Activated B cell treated with CpG ODN at 0.5 μM for 24 hours (primary cell): ENCODE measurements at regions of chr1 and their contacts with region 1.

Region 1: DNA sequence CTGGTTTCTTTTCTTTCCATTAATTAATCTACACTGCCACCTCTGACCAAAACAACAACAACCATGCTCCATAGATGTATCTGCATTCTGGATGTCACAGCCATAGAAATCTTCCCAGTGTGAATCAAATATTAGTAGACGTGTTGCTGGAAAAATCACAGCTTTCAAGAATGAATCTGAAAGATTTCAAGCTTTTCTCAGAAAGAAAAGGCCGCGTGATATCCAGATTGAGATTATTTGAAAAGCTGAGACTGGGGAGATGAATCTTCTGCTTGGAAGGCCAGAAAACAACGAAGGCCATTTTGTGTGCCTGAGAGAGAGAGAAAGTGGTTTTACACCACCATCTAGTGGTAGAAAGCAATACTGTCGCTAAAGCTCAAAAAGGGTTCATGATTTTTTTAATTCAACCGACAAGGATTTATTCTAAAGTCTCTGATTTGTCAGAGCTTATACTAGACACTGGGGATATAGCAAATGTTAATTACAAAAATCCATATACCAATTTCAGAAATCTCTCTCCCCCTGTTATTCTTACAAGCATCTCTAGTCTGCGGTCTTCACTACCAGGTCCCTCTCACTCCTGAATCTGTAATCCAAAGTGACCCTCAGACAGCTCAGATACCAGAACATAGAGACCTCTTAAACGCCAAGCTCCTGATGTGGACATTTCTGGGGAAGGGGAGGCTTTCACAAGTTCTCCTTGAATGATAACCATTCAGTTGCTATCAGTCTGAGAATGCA is 87.5 kb upstream of the SGIP1 start:
- DNase-seq: no peak
- ATAC-seq: peak; percentile 69
- H3K4me3 Mint-ChIP-seq: peak overlapping the region; percentile 69
- H3K27ac Mint-ChIP-seq: peak overlapping the region; percentile 93
- H3K4me1 Mint-ChIP-seq: peaks cover 33% of the 10 kb centered on the region
- H3K27me3 Mint-ChIP-seq: no peaks in the 10 kb centered on the region
- CTCF ChIP-seq: no peak

Region 2: GRCh38 chr1:65687428-65688214 is 758.8 kb before region 1 on chr1:
- CTCF ChIA-PET with region 1: no interaction called
- POLR2A ChIA-PET with region 1: no interaction called
- intact Hi-C with region 1: loop called (anchors 2 kb)
- DNase-seq: peak; percentile 54
- ATAC-seq: peak; percentile 81
- H3K4me3 Mint-ChIP-seq: no peak overlapping the region
- H3K27ac Mint-ChIP-seq: no peak overlapping the region
- H3K4me1 Mint-ChIP-seq: no peaks in the 10 kb centered on the region
- H3K27me3 Mint-ChIP-seq: peaks cover 8% of the 10 kb centered on the region
- CTCF ChIP-seq: peak; percentile 64

Region 3: DNA sequence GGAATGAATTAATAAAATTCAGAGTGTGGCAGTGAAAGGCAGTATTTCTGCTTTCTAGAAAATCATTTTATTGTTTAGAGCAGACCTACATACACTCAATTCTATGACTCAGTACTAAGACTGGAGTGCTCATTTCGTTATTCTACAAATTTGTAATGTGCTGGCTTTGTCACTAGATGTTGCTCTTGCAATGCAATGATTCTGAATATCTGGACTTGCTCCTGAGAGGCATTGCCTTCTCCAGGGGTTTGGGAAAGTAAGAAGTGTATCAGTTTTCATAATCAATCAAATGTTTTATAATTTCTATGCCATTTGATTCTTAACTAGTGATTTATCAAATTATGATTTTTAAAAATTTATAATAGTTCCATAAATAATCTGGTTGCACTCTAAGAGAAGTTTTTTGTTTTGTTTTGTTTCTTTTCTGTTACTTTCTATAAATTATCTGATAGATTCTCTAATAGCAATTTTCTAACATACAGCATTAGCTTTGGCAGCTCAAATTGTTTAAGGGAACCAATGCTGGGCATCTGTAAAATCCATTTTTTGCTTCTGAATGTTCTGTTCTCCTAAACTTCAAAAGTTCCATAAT is 193.0 kb before region 1 on chr1:
- CTCF ChIA-PET with region 1: interaction called, 437 read pairs
- POLR2A ChIA-PET with region 1: interaction called, 22 read pairs
- intact Hi-C with region 1: loop called (anchors 1 kb)
- DNase-seq: no peak
- ATAC-seq: peak; percentile 95
- H3K4me3 Mint-ChIP-seq: no peak overlapping the region
- H3K27ac Mint-ChIP-seq: peak overlapping the region; percentile 82
- H3K4me1 Mint-ChIP-seq: peaks cover 28% of the 10 kb centered on the region
- H3K27me3 Mint-ChIP-seq: no peaks in the 10 kb centered on the region
- CTCF ChIP-seq: peak; percentile 34

Region 4: DNA sequence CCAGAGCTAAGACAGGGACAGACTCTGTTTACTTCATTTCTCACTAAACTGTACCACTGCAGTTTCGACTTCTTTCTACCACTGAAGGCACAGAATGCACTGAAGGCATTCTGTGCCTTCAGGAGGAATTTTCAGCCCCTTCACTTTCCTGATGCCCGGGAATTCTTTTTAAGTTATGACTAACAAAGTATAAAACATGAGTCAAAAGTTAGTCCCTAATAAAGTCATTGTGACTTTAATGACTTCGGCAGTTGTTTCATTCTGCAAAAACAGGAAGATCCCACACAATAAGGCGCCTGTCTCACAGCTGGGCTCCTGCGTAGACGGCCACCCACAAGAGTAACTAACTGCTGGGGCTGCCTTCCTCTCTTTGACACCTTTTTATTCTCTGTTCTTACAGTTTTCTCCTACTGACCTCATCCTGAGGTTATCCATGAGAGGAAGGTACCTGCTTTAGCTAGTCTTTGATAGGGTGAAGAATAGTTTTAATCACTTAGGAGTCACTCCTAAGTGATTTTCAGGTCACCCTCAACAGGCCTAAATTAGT is 96.4 kb before region 1 on chr1:
- CTCF ChIA-PET with region 1: interaction called, 30 read pairs
- POLR2A ChIA-PET with region 1: interaction called, 4 read pairs
- intact Hi-C with region 1: no loop called
- DNase-seq: no peak
- ATAC-seq: peak; percentile 80
- H3K4me3 Mint-ChIP-seq: peak overlapping the region; percentile 72
- H3K27ac Mint-ChIP-seq: peak overlapping the region; percentile 89
- H3K4me1 Mint-ChIP-seq: peaks cover 97% of the 10 kb centered on the region
- H3K27me3 Mint-ChIP-seq: no peaks in the 10 kb centered on the region
- CTCF ChIP-seq: no peak

Region 5: GRCh38 chr1:66396212-66396890 is 50.1 kb before region 1 on chr1:
- CTCF ChIA-PET with region 1: interaction called, 61 read pairs
- POLR2A ChIA-PET with region 1: interaction called, 27 read pairs
- intact Hi-C with region 1: no loop called
- DNase-seq: no peak
- ATAC-seq: peak; percentile 71
- H3K4me3 Mint-ChIP-seq: peak overlapping the region; percentile 48
- H3K27ac Mint-ChIP-seq: peak overlapping the region; percentile 74
- H3K4me1 Mint-ChIP-seq: peaks cover 81% of the 10 kb centered on the region
- H3K27me3 Mint-ChIP-seq: no peaks in the 10 kb centered on the region
- CTCF ChIP-seq: no peak